Ascending aorta (tissue), 2 donors: ENCODE measurements at regions of chr11 and their contacts with region 1.

Region 1: DNA sequence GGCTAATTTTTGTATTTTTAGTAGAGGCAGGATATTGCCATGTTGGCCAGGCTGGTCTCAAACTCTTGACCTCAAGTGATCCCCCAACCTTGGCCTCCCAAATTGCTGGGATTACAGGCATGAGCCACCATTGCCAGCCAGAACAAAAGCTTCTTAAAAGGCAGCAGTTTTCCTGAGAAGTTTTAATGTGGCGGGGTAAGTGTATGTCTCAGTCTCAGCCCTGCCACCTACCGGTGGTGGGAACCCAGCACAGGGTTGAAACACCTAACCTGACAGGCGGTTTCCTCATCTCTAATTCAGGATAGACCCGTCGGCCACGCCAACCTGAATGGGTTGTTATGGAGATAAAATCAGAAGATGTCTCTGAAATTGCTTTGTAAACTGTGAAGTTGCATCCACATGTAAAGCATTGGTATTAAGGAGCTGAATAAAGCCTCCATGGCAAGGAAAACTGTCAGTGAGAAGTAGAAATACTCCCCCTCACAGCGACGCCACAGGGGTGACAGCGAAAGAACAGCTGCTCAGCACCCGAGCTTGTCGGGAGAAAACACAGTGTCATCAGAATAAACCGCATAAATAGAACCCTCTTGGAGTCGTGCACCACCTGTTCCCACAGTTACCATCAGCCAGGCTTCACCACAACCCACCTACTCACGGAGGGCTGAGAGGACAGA is 165.9 kb upstream of the NCAM1 start:
- DNase-seq: no peak
- H3K4me3 ChIP-seq: no peak overlapping the region
- H3K27ac ChIP-seq: peak overlapping the region; percentile 83 to 87
- H3K4me1 ChIP-seq: peaks cover 4 to 17% of the 10 kb centered on the region in 2 donors
- H3K27me3 ChIP-seq: no peaks in the 10 kb centered on the region
- CTCF ChIP-seq: peak; percentile 42 to 60 (median 43)

Region 2: DNA sequence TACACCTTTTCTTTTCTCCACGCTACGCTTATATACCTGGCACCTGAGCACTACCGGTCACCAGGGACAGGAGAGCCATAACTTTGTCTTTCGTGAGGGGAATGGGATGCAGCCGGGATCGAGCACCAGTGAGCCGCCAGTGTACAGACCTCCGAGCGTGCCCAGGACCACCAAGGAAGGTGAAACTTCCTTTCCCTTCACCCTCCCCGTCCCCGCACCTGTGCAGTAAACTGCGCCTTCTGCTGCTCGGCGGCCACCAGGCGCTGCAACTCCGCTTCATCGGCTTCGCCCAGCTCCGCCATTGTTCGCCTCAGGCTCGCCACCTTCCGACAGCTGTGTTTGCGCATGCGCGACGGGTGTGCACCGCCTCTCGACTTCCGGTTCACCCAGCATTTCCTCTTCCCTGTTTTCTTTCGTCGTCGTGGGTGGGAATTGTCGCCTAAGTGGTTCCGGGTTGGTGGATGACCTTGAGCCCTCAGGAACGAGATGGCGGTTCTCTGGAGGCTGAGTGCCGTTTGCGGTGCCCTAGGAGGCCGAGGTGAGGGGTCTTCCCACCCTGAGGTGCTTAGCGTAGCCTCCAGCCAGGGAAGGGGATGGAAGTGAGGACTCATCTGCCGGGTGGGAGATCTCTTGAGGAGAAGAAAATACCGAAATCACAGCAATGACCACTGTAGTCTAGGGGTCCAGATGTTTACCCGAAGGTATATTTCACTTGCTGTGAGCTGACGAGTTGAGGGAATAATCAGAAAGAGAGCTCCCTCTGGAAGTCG is 708.7 kb before region 1 on chr11 and contains the starts of genes SDHD and TIMM8B:
- intact Hi-C with region 1: loop called (anchors 10 kb)
- DNase-seq: peak; percentile 85 to 98
- H3K4me3 ChIP-seq: peak within 1 kb of the TSS; percentile 86 to 94
- H3K27ac ChIP-seq: peak within 1 kb of the TSS; percentile 63 to 75
- H3K4me1 ChIP-seq: peaks cover 5 to 23% of the 10 kb centered on the region in 2 donors
- H3K27me3 ChIP-seq: no peaks in the 10 kb centered on the region
- CTCF ChIP-seq: peak in 2 of 3 experiments; percentile 34 to 36
- total RNA-seq, gene SDHD: 68.5 TPM
- total RNA-seq, gene TIMM8B: 28.9 TPM

Region 3: GRCh38 chr11:112759418-112759817 is 35.9 kb before region 1 on chr11:
- intact Hi-C with region 1: loop called (anchors 5 kb)
- DNase-seq: no peak
- H3K4me3 ChIP-seq: no peak overlapping the region
- H3K27ac ChIP-seq: no peak overlapping the region
- H3K4me1 ChIP-seq: peaks cover 0 to 3% of the 10 kb centered on the region in 2 donors
- H3K27me3 ChIP-seq: no peaks in the 10 kb centered on the region
- CTCF ChIP-seq: no peak

Region 4: GRCh38 chr11:112961146-112961668 is 165.9 kb after region 1 on chr11 and contains the start of gene NCAM1:
- intact Hi-C with region 1: loop called (anchors 2 kb)
- DNase-seq: peak in 1 of 2 donors; percentile 68
- H3K4me3 ChIP-seq: peak within 1 kb of the TSS; percentile 69 to 79
- H3K27ac ChIP-seq: peak within 1 kb of the TSS in 1 of 2 donors; percentile 1
- H3K4me1 ChIP-seq: peaks cover 0 to 7% of the 10 kb centered on the region in 2 donors
- H3K27me3 ChIP-seq: no peaks in the 10 kb centered on the region
- CTCF ChIP-seq: no peak
- total RNA-seq, gene NCAM1: 3.3 TPM

Region 5: DNA sequence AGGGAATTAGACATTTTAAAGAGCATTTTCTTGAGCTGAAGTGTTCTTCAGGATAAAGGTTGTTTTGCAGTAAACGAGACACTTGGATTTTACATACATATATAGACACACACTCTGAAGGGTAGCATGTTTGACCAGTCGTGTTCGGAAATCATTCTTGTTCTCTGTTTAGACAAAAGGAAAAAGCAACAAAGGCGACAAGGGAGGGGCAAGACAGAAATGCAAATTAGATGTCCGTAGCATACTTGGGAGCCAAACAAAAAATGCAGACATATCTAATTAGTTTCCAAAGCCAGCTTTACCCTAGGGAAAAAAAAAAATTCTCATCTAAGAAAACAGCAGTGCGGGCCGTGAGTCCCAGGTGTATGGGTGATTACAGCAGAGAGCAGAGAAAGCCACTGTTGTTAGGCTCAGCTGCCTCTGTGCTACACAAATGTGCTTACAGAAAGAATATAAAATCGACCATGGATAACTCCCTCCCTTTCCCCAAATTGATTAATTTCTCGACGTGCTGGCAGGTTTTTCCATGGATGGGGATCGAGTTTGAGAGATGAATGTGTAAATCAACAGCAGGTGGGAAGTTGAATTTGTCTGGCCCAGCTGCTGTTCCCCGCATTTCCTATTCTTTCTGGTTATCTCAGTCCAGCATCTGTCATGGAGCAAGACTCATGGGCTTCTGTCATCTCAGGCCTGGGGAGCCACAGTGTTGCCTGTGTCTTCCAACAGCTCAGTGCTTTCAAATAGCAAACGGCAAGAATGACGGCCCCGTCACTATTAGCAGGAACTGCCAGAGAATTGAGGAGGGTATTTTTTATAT is 342.6 kb after region 1 on chr11:
- intact Hi-C with region 1: no loop called
- DNase-seq: no peak
- H3K4me3 ChIP-seq: no peak overlapping the region
- H3K27ac ChIP-seq: no peak overlapping the region
- H3K4me1 ChIP-seq: no peaks in the 10 kb centered on the region
- H3K27me3 ChIP-seq: no peaks in the 10 kb centered on the region
- CTCF ChIP-seq: no peak

Region 6: GRCh38 chr11:113532697-113533424 is 737.6 kb after region 1 on chr11:
- intact Hi-C with region 1: loop called (anchors 10 kb)
- DNase-seq: peak in 1 of 2 donors; percentile 81
- H3K4me3 ChIP-seq: no peak overlapping the region
- H3K27ac ChIP-seq: no peak overlapping the region
- H3K4me1 ChIP-seq: peaks cover 0 to 2% of the 10 kb centered on the region in 2 donors
- H3K27me3 ChIP-seq: no peaks in the 10 kb centered on the region
- CTCF ChIP-seq: peak; percentile 55 to 86 (median 81)